HCT116 (cell line): ENCODE measurements at regions of chr22 and their contacts with region 1.

Region 1: DNA sequence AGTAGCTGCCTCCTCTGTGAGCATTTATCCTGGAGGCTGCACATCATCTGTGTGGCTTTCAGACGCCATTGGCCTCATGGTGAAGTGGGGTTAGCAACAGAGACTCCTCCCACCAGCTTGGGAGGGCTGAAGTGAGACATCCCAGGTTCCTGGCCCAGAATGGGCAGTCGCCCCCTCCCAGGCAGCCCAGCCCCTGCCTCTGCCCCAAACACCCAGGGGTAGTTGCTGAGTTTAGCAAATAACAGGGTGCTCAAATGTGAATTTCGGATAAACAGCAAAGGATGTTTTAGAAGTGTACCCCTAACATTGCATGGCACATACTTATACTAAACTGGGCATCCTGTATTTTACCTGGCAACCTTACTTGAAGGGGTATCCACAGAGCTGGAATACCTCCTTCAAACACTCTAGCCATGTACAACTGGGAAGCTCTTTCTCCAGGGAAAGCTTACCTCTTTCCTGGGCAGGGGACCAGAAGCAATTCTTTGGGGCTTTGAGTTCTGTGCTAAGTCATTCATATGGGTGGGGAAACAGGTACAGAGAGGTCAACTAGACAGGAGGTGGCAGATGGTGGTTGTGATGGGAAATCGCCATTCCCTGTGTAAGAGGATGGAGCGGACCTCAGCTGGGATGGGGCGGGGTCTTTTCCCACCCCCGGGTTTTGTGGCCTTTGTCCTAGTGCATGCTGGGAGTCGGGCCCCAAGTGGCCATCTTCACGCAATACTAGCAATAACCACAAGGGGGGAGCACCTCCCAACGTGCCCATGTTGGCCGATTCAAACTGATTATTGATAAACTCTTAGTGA is 19.3 kb downstream of the MTFP1 start:
- DNase-seq: peak; percentile 54
- ATAC-seq: peak; percentile 85
- H3K4me3 ChIP-seq: peak overlapping the region in 1 of 2 experiments; percentile 6; a peak in 1 of 4 replicates
- H3K27ac ChIP-seq: peak overlapping the region; percentile 4
- H3K4me1 ChIP-seq: peaks cover 6 to 40% of the 10 kb centered on the region in 2 experiments
- H3K27me3 ChIP-seq: no peaks in the 10 kb centered on the region
- CTCF ChIP-seq: peak; percentile 81 to 86 (median 85)
- POLR2A ChIP-seq: peak; percentile 98
- RAD21 ChIP-seq: peak; percentile 84

Region 2: DNA sequence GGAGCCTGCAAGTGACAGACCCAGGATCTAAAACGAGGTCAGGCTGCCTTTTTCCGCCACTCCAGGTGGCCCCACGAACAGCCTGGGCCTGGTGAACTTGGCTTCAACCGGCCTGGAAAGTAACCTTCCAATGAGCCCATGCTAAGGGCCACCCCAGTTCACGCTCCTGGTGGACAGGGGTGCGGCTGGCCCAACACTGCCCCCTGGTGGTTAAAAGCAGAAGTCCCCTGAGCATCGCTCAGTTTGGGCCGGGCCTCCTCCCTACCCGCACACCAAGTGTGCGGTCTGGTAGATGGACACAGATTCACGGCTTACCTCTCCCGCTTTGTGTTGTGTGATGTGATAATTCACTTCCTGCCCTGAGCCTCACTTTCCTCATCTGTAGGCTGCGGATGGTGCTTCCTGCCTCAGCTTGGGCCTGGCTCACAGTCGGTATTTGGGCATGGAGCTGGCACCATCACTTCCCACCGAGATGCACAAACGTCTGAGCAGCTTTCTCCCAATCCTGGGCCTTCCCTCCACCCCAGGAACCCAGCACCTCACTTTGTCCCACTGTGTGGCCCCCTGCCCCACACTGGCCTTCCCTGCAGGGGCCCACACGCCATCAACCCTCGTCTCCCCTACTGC is 40.6 kb after region 1 on chr22:
- CTCF ChIA-PET with region 1: interaction called, 6 read pairs
- POLR2A ChIA-PET with region 1: interaction called, 3 read pairs
- RAD21 ChIA-PET with region 1: interaction called in 1 of 2 experiments, 4 read pairs
- intact Hi-C with region 1: loop called (anchors 1 kb)
- DNase-seq: peak; percentile 28
- ATAC-seq: peak; percentile 99
- H3K4me3 ChIP-seq: no peak overlapping the region
- H3K27ac ChIP-seq: no peak overlapping the region; the same call in 1 of the 2 replicates
- H3K4me1 ChIP-seq: peaks cover 0 to 7% of the 10 kb centered on the region in 2 experiments; a peak in 2 of 4 replicates
- H3K27me3 ChIP-seq: no peaks in the 10 kb centered on the region
- CTCF ChIP-seq: peak; percentile 77 to 95 (median 85)
- POLR2A ChIP-seq: no peak
- RAD21 ChIP-seq: peak; percentile 85

Region 3: GRCh38 chr22:30606455-30607299 is 161.8 kb after region 1 on chr22 and contains the start of gene TCN2:
- CTCF ChIA-PET with region 1: interaction called, 10 read pairs
- POLR2A ChIA-PET with region 1: no interaction called
- RAD21 ChIA-PET with region 1: interaction called in 1 of 2 experiments, 9 read pairs
- intact Hi-C with region 1: loop called (anchors 1 kb)
- DNase-seq: no peak
- ATAC-seq: peak; percentile 59
- H3K4me3 ChIP-seq: peak within 1 kb of the TSS; percentile 51 to 68
- H3K27ac ChIP-seq: peak within 1 kb of the TSS; percentile 13; the same call in 1 of the 2 replicates
- H3K4me1 ChIP-seq: peaks cover 22 to 49% of the 10 kb centered on the region in 2 experiments
- H3K27me3 ChIP-seq: no peaks in the 10 kb centered on the region
- CTCF ChIP-seq: 0 out of 6 replicates have a peak, but pooled peaks of 1 of the 3 experiments have one; percentile 1
- POLR2A ChIP-seq: no peak
- RAD21 ChIP-seq: no peak
- total RNA-seq, gene TCN2: 2.2 TPM

Region 4: DNA sequence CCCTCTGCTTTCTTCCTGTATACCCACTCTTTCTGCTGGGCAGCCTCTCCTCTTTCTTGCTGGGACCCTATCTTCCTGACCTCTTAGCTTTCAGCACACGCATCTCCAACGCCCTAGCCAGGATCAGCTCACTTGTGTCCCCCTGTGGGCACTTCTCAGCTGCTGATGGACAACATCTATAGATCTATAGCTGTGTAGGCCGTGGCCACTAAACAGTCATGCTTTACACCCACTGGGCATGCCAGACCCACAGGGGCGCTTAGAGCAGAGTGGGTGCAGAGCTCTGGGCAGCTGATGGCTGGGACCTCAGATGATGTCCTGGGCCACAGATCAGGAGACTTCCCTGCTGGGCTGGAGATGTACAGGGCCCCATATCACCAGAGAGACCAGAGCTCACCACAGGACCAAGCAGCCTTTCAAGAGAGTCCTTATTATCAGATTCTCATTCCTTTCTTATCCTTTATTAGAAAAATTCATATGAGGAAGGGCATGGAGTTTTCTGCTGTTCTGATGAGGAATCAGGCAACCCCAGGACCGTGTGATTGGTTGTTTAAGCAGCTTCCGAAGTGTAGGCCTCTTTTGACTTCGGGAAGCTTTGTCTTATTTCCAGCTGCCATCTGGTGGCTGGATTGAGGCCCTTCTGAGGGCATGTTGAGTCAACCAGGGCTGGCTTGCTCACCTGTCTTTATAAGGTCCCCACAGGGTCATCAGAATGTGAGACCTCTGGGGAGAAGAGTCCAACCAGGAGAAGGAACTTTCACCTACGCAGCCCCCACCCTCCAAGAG is 310.3 kb after region 1 on chr22:
- CTCF ChIA-PET with region 1: interaction called, 14 read pairs
- POLR2A ChIA-PET with region 1: interaction called, 3 read pairs
- RAD21 ChIA-PET with region 1: no interaction called
- intact Hi-C with region 1: loop called (anchors 2 kb)
- DNase-seq: peak; percentile 66
- ATAC-seq: peak; percentile 96
- H3K4me3 ChIP-seq: no peak overlapping the region
- H3K27ac ChIP-seq: no peak overlapping the region
- H3K4me1 ChIP-seq: peaks cover 0 to 6% of the 10 kb centered on the region in 2 experiments; a peak in 1 of 4 replicates
- H3K27me3 ChIP-seq: no peaks in the 10 kb centered on the region
- CTCF ChIP-seq: peak; percentile 80 to 87 (median 82)
- POLR2A ChIP-seq: no peak
- RAD21 ChIP-seq: peak; percentile 97